Naive thymus-derived CD4-positive, alpha-beta T cell (primary cell): ENCODE measurements at regions of chr1 and their contacts with region 1.

Region 1: GRCh38 chr1:42993631-42994121 is 35.0 kb upstream of the SLC2A1 start:
- DNase-seq: no peak
- ATAC-seq: peak; percentile 66
- H3K4me3 ChIP-seq: no peak overlapping the region
- H3K4me3 Mint-ChIP-seq: no peak overlapping the region
- H3K27ac ChIP-seq: no peak overlapping the region
- H3K27ac Mint-ChIP-seq: peak overlapping the region in 1 of 9 donors; percentile 48
- H3K4me1 ChIP-seq: no peaks in the 10 kb centered on the region
- H3K4me1 Mint-ChIP-seq: peaks cover 0 to 6% (median 0%) of the 10 kb centered on the region in 7 donors
- H3K27me3 ChIP-seq: no peaks in the 10 kb centered on the region
- H3K27me3 Mint-ChIP-seq: no peaks in the 10 kb centered on the region

Region 2: GRCh38 chr1:43008115-43009060 is 14.7 kb after region 1 on chr1:
- CTCF ChIA-PET with region 1: interaction called, 10 read pairs
- POLR2A ChIA-PET with region 1: interaction called, 6 read pairs
- intact Hi-C with region 1: no loop called
- DNase-seq: no peak
- ATAC-seq: no peak
- H3K4me3 ChIP-seq: no peak overlapping the region
- H3K4me3 Mint-ChIP-seq: no peak overlapping the region
- H3K27ac ChIP-seq: no peak overlapping the region
- H3K27ac Mint-ChIP-seq: no peak overlapping the region
- H3K4me1 ChIP-seq: no peaks in the 10 kb centered on the region
- H3K4me1 Mint-ChIP-seq: peaks cover 0 to 1% (median 0%) of the 10 kb centered on the region in 7 donors
- H3K27me3 ChIP-seq: peaks cover 0 to 2% of the 10 kb centered on the region in 2 donors
- H3K27me3 Mint-ChIP-seq: peaks cover 0 to 21% (median 0%) of the 10 kb centered on the region in 5 donors